PC-9 (cell line): ENCODE measurements at regions of chr2 and their contacts with region 1.

Region 1: DNA sequence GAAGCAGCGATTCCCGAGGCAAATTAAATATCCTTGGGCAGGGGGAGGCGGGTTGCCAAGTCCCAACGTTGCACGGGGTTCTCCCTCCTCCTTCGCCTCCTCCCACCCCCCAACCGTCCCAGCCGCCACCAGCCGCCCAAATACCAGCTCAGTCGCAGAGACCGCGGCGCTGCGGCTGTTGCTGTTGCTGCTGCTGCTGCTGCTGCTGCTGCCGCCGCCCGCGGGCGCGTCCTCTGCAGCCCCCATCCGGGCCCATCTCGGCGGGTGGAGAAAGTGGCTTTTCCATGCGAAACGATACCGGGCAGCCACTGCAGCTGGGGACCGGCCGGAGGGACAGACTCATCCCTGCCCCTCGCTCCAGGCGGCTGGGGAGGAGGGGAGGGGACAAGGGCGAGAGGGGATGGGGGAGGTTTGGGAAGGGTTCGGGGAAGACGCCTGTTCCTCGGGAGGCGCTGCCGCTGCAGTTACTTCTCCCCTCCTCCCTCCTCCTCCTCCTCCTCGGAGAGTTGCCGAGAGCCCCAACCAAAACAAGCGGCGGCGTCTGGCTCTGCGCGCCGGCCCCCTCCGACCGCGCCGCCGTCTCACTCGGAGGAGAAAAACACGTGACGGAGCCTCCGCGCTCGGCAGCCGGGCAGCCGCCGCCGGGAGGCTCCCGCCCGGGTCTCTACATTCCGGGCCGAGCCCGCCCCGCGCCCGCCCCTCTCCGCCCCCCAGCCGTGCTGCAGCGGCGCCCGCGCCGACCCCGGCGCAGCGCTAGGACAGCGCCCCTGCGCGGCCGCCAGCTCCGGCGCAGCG is at the start of gene IRS1:
- DNase-seq: peak; percentile 57 to 76
- H3K4me3 ChIP-seq: peak within 1 kb of the TSS; percentile 95
- H3K27ac ChIP-seq: peak within 1 kb of the TSS; percentile 61
- H3K4me1 ChIP-seq: peaks cover 45% of the 10 kb centered on the region
- H3K27me3 ChIP-seq: no peaks in the 10 kb centered on the region
- CTCF ChIP-seq: no peak
- total RNA-seq, gene IRS1: 26.2 and 28.6 TPM in 2 replicates

Region 2: DNA sequence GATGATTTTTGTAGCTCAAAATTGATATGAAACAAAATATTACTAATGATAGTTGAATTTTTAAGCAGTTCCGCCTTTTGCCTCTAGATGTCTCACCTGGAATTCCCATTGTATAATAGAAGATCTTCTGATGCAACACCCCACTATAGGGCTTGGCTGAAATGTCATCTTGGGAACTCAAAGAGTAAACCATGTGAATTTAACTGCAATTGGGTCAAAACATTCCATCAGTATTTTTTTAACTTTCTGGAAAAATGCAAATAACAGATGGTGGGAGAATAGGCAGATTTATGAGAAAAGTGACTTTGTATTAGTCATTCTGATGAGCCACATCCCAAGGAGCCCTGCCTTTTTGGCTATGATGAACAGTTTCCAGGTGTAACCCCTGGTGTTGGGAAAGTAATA is 909.9 kb before region 1 on chr2:
- CTCF ChIA-PET with region 1: interaction called, 4 read pairs
- POLR2A ChIA-PET with region 1: no interaction called
- intact Hi-C with region 1: loop called (anchors 1 kb)
- DNase-seq: peak; percentile 2 to 58
- H3K4me3 ChIP-seq: no peak overlapping the region
- H3K27ac ChIP-seq: peak overlapping the region; percentile 48
- H3K4me1 ChIP-seq: peaks cover 8% of the 10 kb centered on the region; the same call in 1 of the 2 replicates
- H3K27me3 ChIP-seq: no peaks in the 10 kb centered on the region
- CTCF ChIP-seq: peak; percentile 88

Region 3: GRCh38 chr2:226130192-226130591 is 669.2 kb before region 1 on chr2:
- CTCF ChIA-PET with region 1: no interaction called
- POLR2A ChIA-PET with region 1: no interaction called
- intact Hi-C with region 1: loop called (anchors 5 kb)
- DNase-seq: no peak
- H3K4me3 ChIP-seq: no peak overlapping the region
- H3K27ac ChIP-seq: no peak overlapping the region
- H3K4me1 ChIP-seq: 0 out of 2 replicates have a peak, but pooled peaks cover 9% of the 10 kb centered on the region
- H3K27me3 ChIP-seq: no peaks in the 10 kb centered on the region
- CTCF ChIP-seq: no peak

Region 4: DNA sequence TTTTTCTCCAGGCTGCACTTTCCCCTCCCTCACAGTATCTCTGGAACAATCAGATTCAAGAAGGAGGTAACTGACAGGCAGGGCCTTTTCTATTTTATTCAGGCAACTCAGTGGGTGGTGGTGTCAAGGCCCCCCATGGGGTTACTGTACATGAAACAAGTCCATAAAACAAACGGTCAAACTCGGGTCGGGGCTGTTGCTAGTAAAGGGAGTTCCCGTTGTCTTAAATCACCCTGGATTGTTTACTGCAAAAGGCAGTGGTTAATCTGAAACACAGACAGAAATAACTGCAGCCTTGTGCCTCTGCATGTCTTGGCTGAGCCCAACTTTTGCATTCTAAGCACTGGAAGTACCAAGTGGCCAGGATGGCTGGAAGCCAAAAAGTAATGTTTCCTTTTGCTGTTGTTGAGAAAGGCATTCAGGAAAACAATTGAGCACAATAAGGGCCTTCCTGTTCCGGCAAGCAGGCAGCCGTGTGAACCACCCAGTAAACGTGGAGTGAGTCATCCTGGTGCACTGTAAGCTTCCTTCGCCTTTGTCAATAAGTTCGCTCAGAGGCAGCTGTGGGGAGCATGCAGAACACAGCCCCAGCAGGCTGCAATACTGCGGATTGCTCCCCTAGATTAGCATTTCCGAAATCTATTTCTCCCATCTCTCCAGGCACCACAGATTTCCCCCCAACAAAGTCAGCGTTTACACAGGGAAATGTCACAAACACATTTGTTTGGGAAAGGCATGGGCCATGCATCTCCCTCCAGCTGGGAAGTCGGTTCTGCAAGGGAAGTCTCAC is 149.3 kb before region 1 on chr2:
- CTCF ChIA-PET with region 1: no interaction called
- POLR2A ChIA-PET with region 1: no interaction called
- intact Hi-C with region 1: loop called (anchors 2 kb)
- DNase-seq: peak; percentile 80 to 88
- H3K4me3 ChIP-seq: no peak overlapping the region
- H3K27ac ChIP-seq: peak overlapping the region; percentile 92
- H3K4me1 ChIP-seq: peaks cover 45% of the 10 kb centered on the region
- H3K27me3 ChIP-seq: no peaks in the 10 kb centered on the region
- CTCF ChIP-seq: no peak

Region 5: GRCh38 chr2:226984750-226985582 is 185.6 kb after region 1 on chr2:
- CTCF ChIA-PET with region 1: interaction called, 4 read pairs
- POLR2A ChIA-PET with region 1: interaction called, 8 read pairs
- intact Hi-C with region 1: loop called (anchors 1 kb)
- DNase-seq: peak; percentile 22 to 43
- H3K4me3 ChIP-seq: no peak overlapping the region
- H3K27ac ChIP-seq: no peak overlapping the region
- H3K4me1 ChIP-seq: no peaks in the 10 kb centered on the region
- H3K27me3 ChIP-seq: no peaks in the 10 kb centered on the region
- CTCF ChIP-seq: peak; percentile 72